Natural killer cell (primary cell): ENCODE measurements at regions of chr7 and their contacts with region 1.

Region 1: GRCh38 chr7:8125680-8126444 is 136.1 kb downstream of the ICA1 start:
- DNase-seq: peak; percentile 73 to 93
- ATAC-seq: peak; percentile 79 to 92 (median 87)
- H3K4me3 ChIP-seq: no peak overlapping the region
- H3K4me3 Mint-ChIP-seq: peak overlapping the region; percentile 81
- H3K27ac ChIP-seq: peak overlapping the region; percentile 79
- H3K27ac Mint-ChIP-seq: peak overlapping the region; percentile 88 to 97
- H3K4me1 ChIP-seq: peaks cover 64% of the 10 kb centered on the region
- H3K4me1 Mint-ChIP-seq: peaks cover 84 to 90% of the 10 kb centered on the region in 2 donors
- H3K27me3 ChIP-seq: no peaks in the 10 kb centered on the region
- H3K27me3 Mint-ChIP-seq: no peaks in the 10 kb centered on the region
- CTCF ChIP-seq: no peak

Region 2: DNA sequence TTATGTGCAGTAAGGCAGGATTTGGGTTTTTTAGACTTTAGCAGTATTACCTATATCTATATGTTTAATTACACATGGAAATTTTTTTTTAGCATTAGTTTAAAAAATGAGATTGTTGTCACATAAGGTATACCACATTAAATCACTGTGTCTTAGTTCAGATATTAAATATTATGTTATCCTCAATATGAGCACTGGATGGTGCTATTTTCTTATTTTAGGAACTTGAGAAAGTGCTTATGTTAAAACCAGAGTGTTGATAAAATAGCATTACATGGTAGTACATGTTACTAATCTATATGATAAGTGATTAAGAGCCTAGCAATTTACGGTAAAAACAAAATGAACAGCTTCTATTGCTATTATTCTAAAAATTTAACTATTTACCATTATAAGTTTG is 530.4 kb before region 1 on chr7:
- intact Hi-C with region 1: loop called (anchors 5 kb)
- DNase-seq: peak in 1 of 2 donors; percentile 57
- ATAC-seq: peak; percentile 58 to 65 (median 63)
- H3K4me3 ChIP-seq: no peak overlapping the region
- H3K4me3 Mint-ChIP-seq: no peak overlapping the region
- H3K27ac ChIP-seq: no peak overlapping the region
- H3K27ac Mint-ChIP-seq: peak overlapping the region; percentile 58 to 68
- H3K4me1 ChIP-seq: peaks cover 3% of the 10 kb centered on the region
- H3K4me1 Mint-ChIP-seq: peaks cover 7 to 11% of the 10 kb centered on the region in 2 donors
- H3K27me3 ChIP-seq: no peaks in the 10 kb centered on the region
- H3K27me3 Mint-ChIP-seq: no peaks in the 10 kb centered on the region
- CTCF ChIP-seq: peak; percentile 67

Region 3: GRCh38 chr7:7761340-7761980 is 364.4 kb before region 1 on chr7:
- intact Hi-C with region 1: loop called (anchors 5 kb)
- DNase-seq: peak in 1 of 2 donors; percentile 67
- ATAC-seq: peak; percentile 18 to 47 (median 37)
- H3K4me3 ChIP-seq: peak overlapping the region; percentile 49
- H3K4me3 Mint-ChIP-seq: peak overlapping the region; percentile 95
- H3K27ac ChIP-seq: peak overlapping the region; percentile 85
- H3K27ac Mint-ChIP-seq: peak overlapping the region; percentile 89 to 97
- H3K4me1 ChIP-seq: no peaks in the 10 kb centered on the region
- H3K4me1 Mint-ChIP-seq: peaks cover 37 to 41% of the 10 kb centered on the region in 2 donors
- H3K27me3 ChIP-seq: no peaks in the 10 kb centered on the region
- H3K27me3 Mint-ChIP-seq: no peaks in the 10 kb centered on the region
- CTCF ChIP-seq: peak; percentile 62

Region 4: GRCh38 chr7:7968543-7969305 is 157.1 kb before region 1 on chr7 and contains the start of gene GLCCI1:
- intact Hi-C with region 1: loop called (anchors 2 kb)
- DNase-seq: peak; percentile 95 to 98
- ATAC-seq: peak; percentile 85 to 95 (median 88)
- H3K4me3 ChIP-seq: peak within 1 kb of the TSS; percentile 93
- H3K4me3 Mint-ChIP-seq: peak within 1 kb of the TSS; percentile 97
- H3K27ac ChIP-seq: peak within 1 kb of the TSS; percentile 88
- H3K27ac Mint-ChIP-seq: peak within 1 kb of the TSS in 1 of 2 donors; percentile 96
- H3K4me1 ChIP-seq: peaks cover 6% of the 10 kb centered on the region
- H3K4me1 Mint-ChIP-seq: peaks cover 14 to 22% of the 10 kb centered on the region in 2 donors
- H3K27me3 ChIP-seq: no peaks in the 10 kb centered on the region
- H3K27me3 Mint-ChIP-seq: no peaks in the 10 kb centered on the region
- CTCF ChIP-seq: no peak
- total RNA-seq, gene GLCCI1: 70.5 to 132 (median 79.6) TPM

Region 5: DNA sequence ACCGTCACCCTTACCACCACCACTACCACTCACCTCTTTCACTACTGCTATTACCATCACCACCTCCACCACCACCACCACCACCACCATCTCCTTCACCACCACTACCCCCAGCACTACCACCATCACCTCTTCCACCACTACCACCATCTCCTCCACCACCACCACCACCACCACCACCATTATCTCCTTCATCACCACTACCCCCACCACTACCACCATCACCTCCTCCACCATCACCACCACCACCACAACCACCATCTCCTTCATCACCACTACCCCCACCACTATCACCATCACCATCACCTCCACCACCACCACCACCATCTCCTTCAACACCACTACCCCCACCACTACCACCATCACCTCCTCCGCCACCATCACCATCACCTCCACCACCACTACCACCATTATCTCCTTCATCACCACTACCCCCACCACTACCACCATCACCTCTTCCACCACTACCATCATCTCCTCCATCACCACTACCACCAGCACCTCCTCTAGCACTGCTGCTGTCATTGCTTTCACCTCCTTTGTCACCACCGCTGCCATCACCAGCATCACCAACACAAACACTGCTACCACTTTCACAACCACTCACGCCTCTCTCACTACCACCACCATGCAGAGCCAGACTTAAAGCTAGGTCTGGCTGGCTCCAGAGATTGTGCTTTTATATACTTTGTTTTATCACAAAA is 26.8 kb after region 1 on chr7:
- intact Hi-C with region 1: loop called (anchors 2 kb)
- DNase-seq: peak; percentile 52 to 55
- ATAC-seq: peak; percentile 57 to 74 (median 68)
- H3K4me3 ChIP-seq: no peak overlapping the region
- H3K4me3 Mint-ChIP-seq: peak overlapping the region; percentile 53
- H3K27ac ChIP-seq: peak overlapping the region; percentile 0
- H3K27ac Mint-ChIP-seq: peak overlapping the region; percentile 75 to 95
- H3K4me1 ChIP-seq: peaks cover 9% of the 10 kb centered on the region
- H3K4me1 Mint-ChIP-seq: peaks cover 39 to 42% of the 10 kb centered on the region in 2 donors
- H3K27me3 ChIP-seq: no peaks in the 10 kb centered on the region
- H3K27me3 Mint-ChIP-seq: peaks cover 0 to 4% of the 10 kb centered on the region in 2 donors
- CTCF ChIP-seq: no peak